GM12878 (cell line): ENCODE measurements at regions of chr17 and their contacts with region 1.

Region 1: DNA sequence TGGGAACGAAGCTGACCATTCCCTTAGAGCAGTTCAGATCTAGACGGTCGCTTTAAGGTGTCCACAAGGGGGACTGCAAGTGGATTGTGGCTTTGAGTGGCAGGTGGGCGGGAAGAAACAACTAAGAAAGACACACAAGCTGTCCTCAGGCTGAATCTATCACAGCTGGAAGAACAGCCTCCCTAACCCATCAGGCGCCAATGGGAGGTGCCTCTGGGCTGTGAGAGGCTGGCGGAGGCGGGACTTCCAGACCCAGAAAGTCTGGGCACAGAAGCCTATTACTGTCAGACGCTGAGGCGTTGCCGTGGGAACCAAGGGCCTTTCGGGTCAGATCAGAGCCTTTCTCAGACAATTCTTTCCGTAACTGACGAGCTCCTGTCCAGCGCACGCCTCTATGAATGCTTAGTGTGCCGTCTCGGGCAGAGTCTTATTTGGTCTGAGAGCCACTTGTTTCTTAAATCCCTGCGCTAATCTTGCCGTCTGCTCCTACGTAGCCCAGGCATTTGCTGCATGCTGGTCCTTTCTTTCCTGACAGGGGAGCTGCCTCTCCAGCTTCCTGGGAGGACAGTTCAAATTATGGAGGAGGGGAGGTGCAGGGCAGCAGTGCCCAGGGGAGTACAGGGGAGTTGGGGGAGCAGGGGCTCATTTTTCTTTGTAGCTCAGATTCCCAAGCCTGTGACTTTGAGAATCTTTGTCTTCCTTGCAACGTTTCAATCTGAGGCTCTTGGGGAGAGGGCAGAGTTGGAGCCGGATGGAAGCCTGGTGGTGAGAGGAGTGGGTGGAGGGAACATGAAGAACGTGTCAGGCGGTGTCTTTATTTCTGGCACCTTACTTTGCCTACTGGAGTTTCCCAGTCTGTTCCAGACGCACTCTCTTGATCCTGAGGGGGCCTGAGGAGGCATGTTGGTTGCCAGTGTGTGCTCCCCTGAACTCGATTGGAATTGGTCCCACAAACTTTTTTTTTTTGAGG is 618.7 kb downstream of the KCNJ18 start:
- DNase-seq: no peak
- ATAC-seq: no peak
- H3K4me3 ChIP-seq: no peak overlapping the region
- H3K27ac ChIP-seq: no peak overlapping the region
- H3K4me1 ChIP-seq: no peaks in the 10 kb centered on the region
- H3K27me3 ChIP-seq: no peaks in the 10 kb centered on the region
- CTCF ChIP-seq: no peak
- EP300 ChIP-seq: no peak
- POLR2A ChIP-seq: no peak
- RAD21 ChIP-seq: no peak

Region 2: DNA sequence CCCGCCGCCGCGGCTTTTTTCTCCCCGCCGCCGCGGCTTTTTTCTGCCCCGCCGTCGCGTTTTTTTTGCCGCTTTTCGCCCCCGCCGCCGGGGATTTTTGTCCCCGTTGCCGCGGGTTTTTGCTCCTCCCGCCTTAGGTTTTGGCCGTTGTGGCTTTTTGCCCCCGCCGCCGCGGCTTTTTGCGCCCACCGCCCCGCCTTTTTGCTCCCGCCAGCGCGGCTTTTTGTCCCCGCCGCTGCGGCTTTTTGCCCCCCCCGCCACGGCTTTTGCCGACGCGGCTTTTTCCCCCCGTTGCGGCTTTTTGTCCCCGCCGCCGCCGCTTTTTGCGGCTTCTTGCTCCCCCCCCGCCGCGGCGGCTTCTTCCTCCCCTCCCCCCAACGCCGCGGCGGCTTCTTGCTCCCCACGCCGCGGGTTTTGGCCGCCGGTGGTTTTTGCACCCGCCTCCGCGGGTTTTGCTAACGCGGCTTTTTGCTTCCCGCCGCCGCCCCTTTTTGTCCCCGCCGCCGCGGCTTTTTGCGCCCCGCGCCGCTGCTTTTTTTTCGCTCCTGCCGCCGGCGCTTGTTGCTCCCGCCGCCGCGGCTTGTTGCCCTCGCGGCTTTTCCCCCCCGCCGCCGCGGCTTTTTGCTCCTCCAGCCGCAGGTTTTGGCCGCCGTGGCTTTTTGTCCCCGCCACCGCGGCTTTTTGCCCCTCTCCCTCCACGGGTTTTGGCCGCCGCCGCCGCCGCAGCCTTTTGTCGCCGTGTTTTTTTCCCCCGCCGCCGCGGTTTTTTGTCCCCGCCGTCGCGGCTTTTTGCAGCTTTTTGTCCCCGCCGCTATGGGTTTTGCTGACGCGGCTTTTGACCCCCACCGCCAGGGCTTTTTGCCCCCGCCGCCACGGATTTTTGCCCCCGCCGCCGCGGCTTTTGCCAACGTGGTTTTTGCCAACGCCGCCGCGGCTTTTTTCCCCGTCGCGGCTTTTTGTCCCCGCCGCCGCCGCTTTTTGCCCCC is 468.4 kb before region 1 on chr17:
- CTCF ChIA-PET with region 1: no interaction called
- POLR2A ChIA-PET with region 1: no interaction called
- RAD21 ChIA-PET with region 1: no interaction called
- SMC1A ChIA-PET with region 1: no interaction called
- in situ Hi-C with region 1: loop called (anchors 25 kb)
- intact Hi-C with region 1: no loop called
- DNase-seq: no peak
- ATAC-seq: no peak
- H3K4me3 ChIP-seq: no peak overlapping the region
- H3K27ac ChIP-seq: no peak overlapping the region
- H3K4me1 ChIP-seq: no peaks in the 10 kb centered on the region
- H3K27me3 ChIP-seq: no peaks in the 10 kb centered on the region
- CTCF ChIP-seq: no peak
- EP300 ChIP-seq: no peak
- POLR2A ChIP-seq: no peak
- RAD21 ChIP-seq: no peak

Region 3: GRCh38 chr17:22337453-22337852 is 26.5 kb after region 1 on chr17:
- CTCF ChIA-PET with region 1: no interaction called
- POLR2A ChIA-PET with region 1: no interaction called
- RAD21 ChIA-PET with region 1: no interaction called
- SMC1A ChIA-PET with region 1: no interaction called
- in situ Hi-C with region 1: no loop called
- intact Hi-C with region 1: no loop called
- DNase-seq: no peak
- ATAC-seq: no peak
- H3K4me3 ChIP-seq: no peak overlapping the region
- H3K27ac ChIP-seq: no peak overlapping the region
- H3K4me1 ChIP-seq: no peaks in the 10 kb centered on the region
- H3K27me3 ChIP-seq: no peaks in the 10 kb centered on the region
- CTCF ChIP-seq: no peak
- EP300 ChIP-seq: no peak
- POLR2A ChIP-seq: no peak
- RAD21 ChIP-seq: no peak

Region 4: DNA sequence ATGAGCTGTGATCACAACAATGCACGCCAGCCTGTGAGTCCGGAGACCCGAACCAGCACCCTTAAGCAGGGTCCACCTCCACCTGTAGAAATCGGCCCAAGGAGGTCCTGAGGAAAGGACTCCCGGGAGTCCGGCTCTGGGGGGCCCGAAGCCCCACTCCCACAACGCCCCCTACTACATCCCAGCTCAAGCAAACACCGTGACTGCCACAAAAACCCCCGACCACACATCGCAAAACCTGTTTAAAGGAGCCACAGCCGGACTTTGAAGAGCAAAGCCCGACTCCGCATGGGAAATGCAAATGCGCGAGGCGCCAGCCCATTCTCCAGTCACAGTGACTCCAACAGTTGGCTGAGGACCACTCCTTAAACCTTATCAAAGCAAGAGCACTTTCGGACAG is 63.7 kb after region 1 on chr17:
- CTCF ChIA-PET with region 1: no interaction called
- POLR2A ChIA-PET with region 1: no interaction called
- RAD21 ChIA-PET with region 1: no interaction called
- SMC1A ChIA-PET with region 1: no interaction called
- in situ Hi-C with region 1: loop called (anchors 10 kb)
- intact Hi-C with region 1: no loop called
- DNase-seq: no peak
- ATAC-seq: no peak
- H3K4me3 ChIP-seq: no peak overlapping the region
- H3K27ac ChIP-seq: no peak overlapping the region
- H3K4me1 ChIP-seq: no peaks in the 10 kb centered on the region
- H3K27me3 ChIP-seq: no peaks in the 10 kb centered on the region
- CTCF ChIP-seq: no peak
- EP300 ChIP-seq: no peak
- POLR2A ChIP-seq: no peak
- RAD21 ChIP-seq: no peak

Region 5: GRCh38 chr17:22492331-22492730 is 181.3 kb after region 1 on chr17:
- CTCF ChIA-PET with region 1: no interaction called
- POLR2A ChIA-PET with region 1: no interaction called
- RAD21 ChIA-PET with region 1: no interaction called
- SMC1A ChIA-PET with region 1: no interaction called
- in situ Hi-C with region 1: loop called (anchors 25 kb)
- intact Hi-C with region 1: no loop called
- DNase-seq: no peak
- ATAC-seq: no peak
- H3K4me3 ChIP-seq: no peak overlapping the region
- H3K27ac ChIP-seq: no peak overlapping the region
- H3K4me1 ChIP-seq: no peaks in the 10 kb centered on the region
- H3K27me3 ChIP-seq: no peaks in the 10 kb centered on the region
- CTCF ChIP-seq: no peak
- EP300 ChIP-seq: no peak
- POLR2A ChIP-seq: no peak
- RAD21 ChIP-seq: no peak